ENCODE measurements at regions of chr20 and their contacts with region 1.

Region 1: GRCh38 chr20:50395912-50396488 is 114.2 kb upstream of the PTPN1 start:
- DNase-seq: no peak
- H3K4me3 ChIP-seq: no peak overlapping the region
- H3K27ac ChIP-seq: no peak overlapping the region
- H3K4me1 ChIP-seq: peaks cover 9% of the 10 kb centered on the region
- H3K27me3 ChIP-seq: no peaks in the 10 kb centered on the region
- CTCF ChIP-seq: no peak
- EP300 ChIP-seq: no peak
- POLR2A ChIP-seq: no peak

Region 2: GRCh38 chr20:50421356-50422277 is 25.6 kb after region 1 on chr20:
- intact Hi-C with region 1: loop called in 1 of 4 experiments (anchors 2 kb)
- DNase-seq: no peak
- H3K4me3 ChIP-seq: no peak overlapping the region
- H3K27ac ChIP-seq: no peak overlapping the region
- H3K4me1 ChIP-seq: peaks cover 4% of the 10 kb centered on the region
- H3K27me3 ChIP-seq: no peaks in the 10 kb centered on the region
- CTCF ChIP-seq: no peak
- EP300 ChIP-seq: no peak
- POLR2A ChIP-seq: no peak